ENCODE measurements at regions of chr12 and their contacts with region 1.

Region 1: GRCh38 chr12:39990122-39991101 is 115.5 kb downstream of the SLC2A13 start:
- DNase-seq: peak; percentile 36
- CTCF ChIP-seq: peak; percentile 73

Region 2: GRCh38 chr12:39300799-39301198 is 689.6 kb before region 1 on chr12:
- in situ Hi-C with region 1: loop called (anchors 25 kb)
- DNase-seq: no peak
- CTCF ChIP-seq: no peak

Region 3: DNA sequence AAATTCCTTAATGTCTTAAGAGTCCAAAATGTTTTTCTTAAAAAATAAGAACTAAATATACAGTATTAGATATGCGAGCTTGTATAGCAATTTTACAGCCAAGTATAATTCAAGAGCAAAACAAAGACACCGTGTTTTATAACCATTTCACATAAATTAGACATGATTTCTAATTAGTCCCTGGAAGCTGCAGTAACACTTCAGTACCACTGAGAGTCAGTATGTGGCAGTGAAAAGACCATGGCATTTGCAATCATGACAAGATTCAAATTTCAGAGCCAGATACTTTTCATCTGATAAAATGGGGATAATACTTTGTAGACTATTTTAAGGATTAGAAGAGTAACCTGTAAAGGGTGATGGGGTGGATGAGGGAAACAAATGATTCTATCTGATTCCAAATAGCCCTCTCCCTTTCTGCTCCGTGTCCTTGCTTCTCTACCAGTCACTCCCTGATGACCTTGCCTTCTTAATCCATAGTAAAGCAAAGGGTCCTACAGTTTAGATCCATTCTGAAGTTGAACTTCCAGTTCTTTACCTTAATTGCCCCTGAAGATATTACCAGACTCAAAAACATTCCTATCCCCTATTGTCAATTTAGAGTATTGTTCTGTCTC is 225.4 kb before region 1 on chr12:
- in situ Hi-C with region 1: loop called (anchors 10 kb)
- DNase-seq: no peak
- CTCF ChIP-seq: peak; percentile 70

Region 4: DNA sequence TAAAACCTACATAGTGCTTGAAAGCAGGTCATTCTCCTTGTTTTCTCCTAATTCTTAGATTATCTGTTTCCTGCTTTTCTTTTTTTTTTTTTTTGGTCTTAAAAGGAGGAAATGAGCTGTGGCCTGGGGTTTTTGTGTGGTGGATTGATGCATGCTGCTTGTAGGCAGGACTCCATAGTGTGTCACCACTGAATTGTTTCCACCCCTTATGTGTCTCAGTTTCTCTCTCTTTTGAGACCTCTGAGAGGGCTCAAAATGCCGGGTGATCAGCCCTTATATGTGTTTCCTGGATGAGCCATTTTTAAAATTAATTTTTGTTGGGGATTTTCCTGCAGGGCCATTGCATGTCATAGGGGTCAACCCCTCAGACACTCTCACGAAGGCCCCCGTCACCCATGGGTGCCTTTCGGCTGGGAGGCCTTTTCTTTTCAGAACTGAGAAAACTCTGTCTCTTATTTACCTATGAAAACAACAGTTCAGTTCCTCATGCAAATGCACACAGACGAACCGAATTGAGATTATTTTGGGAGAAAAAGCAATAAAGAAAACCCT is 202.4 kb after region 1 on chr12:
- in situ Hi-C with region 1: no loop called
- DNase-seq: peak; percentile 41
- CTCF ChIP-seq: no peak